ENCODE measurements at regions of chr1 and their contacts with region 1.

Region 1: DNA sequence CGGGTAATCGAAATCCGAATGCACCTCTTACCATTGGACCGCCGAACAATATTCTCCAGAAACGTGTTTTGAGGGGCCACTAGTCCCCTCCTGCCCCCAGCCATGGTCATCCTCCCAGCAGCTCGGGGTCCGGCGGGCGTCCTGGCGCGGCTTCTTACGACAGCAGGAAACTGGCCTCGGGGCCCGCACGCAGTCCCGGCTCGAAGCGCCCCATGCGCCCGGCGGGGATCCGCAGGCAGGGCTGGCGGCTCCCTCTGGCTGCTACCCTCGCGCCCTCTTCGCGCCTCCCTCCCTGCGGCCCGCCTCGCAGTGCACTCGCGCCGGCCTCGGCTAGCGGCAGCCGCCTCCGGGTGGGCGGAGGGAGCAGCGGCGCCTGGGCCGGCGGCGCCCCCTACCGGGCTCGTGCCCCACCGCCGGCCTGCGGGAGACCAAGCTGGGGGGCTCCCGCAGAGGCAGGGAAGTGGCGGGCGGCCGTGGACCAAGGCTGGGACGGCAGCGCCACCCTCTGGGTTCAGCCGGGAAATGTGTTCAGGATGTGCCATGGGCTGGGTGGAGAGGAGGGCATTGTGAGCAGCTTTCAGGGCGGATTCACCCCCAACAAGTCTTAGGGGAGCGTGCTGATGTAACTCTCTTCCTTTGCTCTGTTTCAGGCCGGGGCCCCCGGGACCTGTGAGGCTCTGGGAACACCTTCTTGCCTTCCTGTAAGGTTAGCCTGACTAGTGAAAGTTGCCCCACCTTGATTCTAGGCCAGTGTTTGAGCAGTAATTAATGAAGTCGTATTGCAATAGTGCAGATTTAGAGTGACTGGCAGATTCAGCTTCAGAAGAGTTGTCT is at the start of gene KCNH1:
- DNase-seq: peak; percentile 62
- ATAC-seq: peak; percentile 99
- H3K4me3 ChIP-seq: peak within 1 kb of the TSS in 1 of 3 experiments; percentile 61; a peak in 2 of 6 replicates
- H3K27ac ChIP-seq: no peak within 1 kb of the TSS
- H3K4me1 ChIP-seq: peaks cover 12% of the 10 kb centered on the region; the same call in 1 of the 2 replicates
- H3K27me3 ChIP-seq: peaks cover 5 to 17% of the 10 kb centered on the region in 2 experiments; a peak in 4 of 5 replicates
- CTCF ChIP-seq: peak; percentile 93
- EP300 ChIP-seq: no peak
- POLR2A ChIP-seq: no peak
- RAD21 ChIP-seq: peak; percentile 99
- total RNA-seq, gene KCNH1: not detected in 2 replicates

Region 2: DNA sequence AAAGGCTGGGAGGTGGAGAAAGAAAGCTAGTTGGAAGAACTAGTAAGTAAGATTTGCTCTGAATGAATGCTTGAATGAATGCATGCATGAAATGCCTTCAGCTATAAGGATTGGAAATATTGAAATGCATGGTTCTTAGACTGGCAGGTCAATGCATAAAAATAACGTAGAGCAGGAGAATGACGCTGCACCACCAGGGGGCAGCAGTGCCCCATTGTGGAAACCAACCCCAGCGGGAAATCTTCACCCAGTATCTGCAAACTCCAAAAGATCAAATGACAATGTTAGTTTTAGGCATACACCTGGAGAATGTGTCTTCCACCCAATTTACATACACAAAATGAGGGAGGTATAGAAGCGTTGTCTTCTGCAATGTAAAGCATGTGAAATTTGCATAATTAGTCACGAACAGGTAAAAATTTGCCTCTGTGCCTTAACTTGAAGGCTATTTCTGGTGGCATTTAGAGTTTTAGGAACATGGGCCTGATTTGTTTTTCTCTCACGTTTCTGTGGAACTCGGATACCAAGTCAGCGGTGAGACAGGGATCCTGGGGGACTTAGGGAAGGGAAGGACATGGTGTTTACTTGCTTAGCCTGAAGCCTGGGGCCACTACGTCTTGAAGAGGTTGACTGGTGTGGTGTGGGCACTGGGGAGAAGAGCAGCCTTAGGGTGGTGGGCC is 726.7 kb before region 1 on chr1:
- CTCF ChIA-PET with region 1: interaction called, 32 read pairs
- POLR2A ChIA-PET with region 1: no interaction called
- in situ Hi-C with region 1: loop called (anchors 10 kb)
- intact Hi-C with region 1: loop called (anchors 1 kb)
- DNase-seq: peak; percentile 15
- ATAC-seq: peak; percentile 89
- H3K4me3 ChIP-seq: no peak overlapping the region
- H3K27ac ChIP-seq: no peak overlapping the region
- H3K4me1 ChIP-seq: no peaks in the 10 kb centered on the region; the same call in 1 of the 2 replicates
- H3K27me3 ChIP-seq: no peaks in the 10 kb centered on the region
- CTCF ChIP-seq: peak; percentile 88
- EP300 ChIP-seq: no peak
- POLR2A ChIP-seq: no peak
- RAD21 ChIP-seq: peak; percentile 35; the same call in 1 of the 2 replicates

Region 3: DNA sequence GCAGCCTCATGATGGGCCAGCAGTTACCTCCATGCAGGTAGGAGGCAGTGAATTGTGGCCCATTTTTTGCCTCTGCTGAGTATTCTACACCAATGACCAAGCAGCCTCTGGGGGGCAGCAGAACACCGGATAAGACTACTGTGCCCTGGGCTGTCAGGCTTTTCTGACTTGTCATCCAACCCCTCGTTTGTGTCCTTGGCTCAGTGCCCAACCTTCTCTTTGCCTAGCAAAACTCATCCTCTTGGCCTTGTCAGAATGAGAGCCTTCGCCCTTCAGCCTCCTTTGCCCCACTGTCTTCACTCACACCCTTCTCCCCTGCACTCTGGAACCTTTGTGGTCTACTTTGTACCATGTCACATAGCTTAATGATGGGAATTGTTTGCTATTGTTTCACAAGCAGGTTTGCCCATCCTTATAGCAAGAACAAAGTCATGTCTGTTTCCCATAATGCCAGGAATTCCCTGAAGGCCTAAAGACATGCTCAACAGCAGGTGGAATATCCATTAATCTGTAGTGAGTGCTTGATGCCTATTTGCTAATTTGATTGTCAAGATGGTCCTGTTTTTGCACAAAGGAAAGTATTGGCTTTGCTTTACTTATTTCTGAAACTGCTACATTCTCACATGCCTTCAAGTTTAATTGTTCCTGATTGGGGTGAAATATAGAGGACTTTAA is 549.5 kb before region 1 on chr1:
- CTCF ChIA-PET with region 1: interaction called, 38 read pairs
- POLR2A ChIA-PET with region 1: no interaction called
- in situ Hi-C with region 1: loop called (anchors 5 kb)
- intact Hi-C with region 1: loop called (anchors 1 kb)
- DNase-seq: peak; percentile 74
- ATAC-seq: peak; percentile 100
- H3K4me3 ChIP-seq: no peak overlapping the region
- H3K27ac ChIP-seq: no peak overlapping the region
- H3K4me1 ChIP-seq: no peaks in the 10 kb centered on the region
- H3K27me3 ChIP-seq: no peaks in the 10 kb centered on the region
- CTCF ChIP-seq: peak; percentile 92
- EP300 ChIP-seq: no peak
- POLR2A ChIP-seq: no peak
- RAD21 ChIP-seq: peak; percentile 83

Region 4: DNA sequence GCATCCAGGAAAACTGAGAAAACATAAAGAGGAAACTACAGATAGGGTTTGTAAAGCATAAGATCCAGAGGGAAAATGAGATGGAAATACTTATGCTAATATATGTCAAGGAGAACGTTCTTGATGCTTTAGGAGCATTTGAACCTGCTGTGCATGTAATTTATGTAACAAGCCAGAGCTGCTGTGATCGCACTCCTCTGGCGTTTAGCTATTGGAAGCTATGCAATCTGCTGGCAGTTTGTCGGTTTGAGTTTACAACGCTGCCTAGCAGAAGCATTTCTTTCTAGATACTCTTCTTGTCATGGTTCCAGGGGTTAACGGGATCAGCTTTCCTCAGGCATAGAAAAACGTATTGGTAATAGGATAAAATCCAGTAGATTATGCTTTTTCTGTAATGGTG is 182.8 kb before region 1 on chr1:
- CTCF ChIA-PET with region 1: no interaction called
- POLR2A ChIA-PET with region 1: no interaction called
- in situ Hi-C with region 1: no loop called
- intact Hi-C with region 1: loop called (anchors 10 kb)
- DNase-seq: no peak
- ATAC-seq: no peak
- H3K4me3 ChIP-seq: no peak overlapping the region
- H3K27ac ChIP-seq: no peak overlapping the region
- H3K4me1 ChIP-seq: no peaks in the 10 kb centered on the region
- H3K27me3 ChIP-seq: no peaks in the 10 kb centered on the region
- CTCF ChIP-seq: no peak
- EP300 ChIP-seq: no peak
- POLR2A ChIP-seq: no peak
- RAD21 ChIP-seq: no peak